ENCODE measurements at regions of chr15 and their contacts with region 1.

Region 1: DNA sequence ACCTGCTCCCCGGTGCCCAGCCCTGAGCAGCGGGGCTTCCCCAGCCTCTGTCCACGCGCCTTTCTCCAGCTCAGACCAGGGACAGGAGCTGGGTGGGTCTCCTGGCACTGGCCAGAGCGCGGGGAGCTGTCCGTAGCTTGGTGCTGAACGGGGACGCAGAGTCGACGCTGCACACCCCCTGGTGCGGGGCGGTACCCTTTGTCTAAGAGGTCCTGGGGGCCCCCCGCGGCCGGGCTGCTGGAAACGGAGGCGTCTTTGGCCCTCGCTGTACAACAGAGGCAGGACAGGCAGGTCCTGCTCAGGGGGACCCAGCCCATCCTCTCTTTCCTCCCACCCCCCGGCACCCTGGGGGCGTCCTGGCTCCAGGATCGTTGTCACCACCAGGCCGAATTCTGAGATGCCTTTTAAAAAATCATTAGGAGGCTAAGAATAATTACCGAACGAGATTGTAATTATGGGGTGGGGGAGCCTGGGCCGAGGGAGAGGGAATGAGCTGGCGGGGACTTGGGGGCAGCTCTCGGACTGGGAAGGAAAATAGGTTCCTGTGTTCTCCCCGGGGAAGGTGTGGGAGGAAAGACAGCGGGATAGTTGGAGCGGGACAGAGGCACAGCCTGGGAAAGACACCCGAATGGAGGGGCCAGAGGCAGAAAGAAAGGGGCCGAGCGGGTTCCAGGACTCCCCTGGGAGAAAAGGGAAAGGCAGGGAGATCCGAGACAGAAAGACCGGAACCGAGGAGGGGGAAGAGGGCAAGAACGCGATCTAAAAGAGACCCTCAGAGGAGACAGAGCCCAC is 4.1 kb upstream of the SKOR1 start:
- DNase-seq: peak in 1 of 2 experiments; percentile 86
- H3K4me3 ChIP-seq: peak overlapping the region in 3 of 4 experiments; percentile 6 to 50 (median 19); a peak in 5 of 8 replicates
- H3K27ac ChIP-seq: no peak overlapping the region
- H3K4me1 ChIP-seq: peaks cover 2 to 46% (median 36%) of the 10 kb centered on the region in 4 experiments
- H3K27me3 ChIP-seq: peaks cover 74 to 87% (median 86%) of the 10 kb centered on the region in 4 experiments
- CTCF ChIP-seq: no peak
- EP300 ChIP-seq: no peak
- POLR2A ChIP-seq: no peak
- RAD21 ChIP-seq: no peak; a peak in 1 of 4 replicates

Region 2: DNA sequence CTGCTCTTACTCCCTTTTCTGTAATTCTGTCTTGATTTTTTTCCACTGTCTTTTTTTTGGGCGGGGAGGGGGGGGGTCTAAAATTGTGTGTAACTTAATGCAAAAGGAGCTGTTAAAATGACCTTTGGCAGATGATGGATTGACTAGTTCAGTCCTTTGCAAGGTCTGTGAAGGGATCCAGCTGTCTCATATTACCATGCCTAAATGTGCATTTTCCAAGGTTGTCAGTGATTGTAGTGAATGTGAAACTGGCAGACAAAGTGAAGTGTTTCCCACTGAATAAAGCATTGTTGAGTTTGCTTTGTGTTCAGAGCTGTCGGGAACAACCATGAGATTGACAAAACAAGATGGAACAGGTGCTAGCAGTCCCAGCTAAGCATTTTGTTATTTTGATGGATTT is 106.0 kb before region 1 on chr15:
- CTCF ChIA-PET with region 1: no interaction called
- POLR2A ChIA-PET with region 1: no interaction called
- DNase-seq: no peak
- H3K4me3 ChIP-seq: no peak overlapping the region
- H3K27ac ChIP-seq: no peak overlapping the region
- H3K4me1 ChIP-seq: 0 out of 7 replicates have a peak, but pooled peaks cover 0 to under 1% (median 0%) of the 10 kb centered on the region in 4 experiments
- H3K27me3 ChIP-seq: no peaks in the 10 kb centered on the region
- CTCF ChIP-seq: no peak
- EP300 ChIP-seq: no peak
- POLR2A ChIP-seq: no peak
- RAD21 ChIP-seq: no peak

Region 3: DNA sequence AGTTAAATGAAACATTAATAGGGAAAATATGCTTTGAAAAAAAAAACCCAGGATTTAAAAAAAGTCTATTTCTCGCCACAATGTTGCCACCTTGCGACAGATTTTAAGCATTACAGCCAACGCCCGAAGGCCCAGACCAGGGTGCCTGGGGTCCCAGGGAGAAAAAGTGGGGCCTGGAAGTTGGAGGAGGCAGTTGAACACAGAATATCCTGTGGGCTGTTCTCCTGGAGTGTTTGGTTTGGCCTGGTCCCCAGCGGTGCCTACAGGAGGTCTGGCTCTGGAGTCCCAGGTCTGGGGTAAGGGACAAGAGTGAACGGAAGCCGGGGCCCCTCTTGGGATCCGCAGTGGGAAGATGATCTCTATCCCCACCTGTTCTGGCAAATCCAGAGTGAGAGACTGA is 15.3 kb after region 1 on chr15:
- CTCF ChIA-PET with region 1: interaction called, 11 read pairs
- POLR2A ChIA-PET with region 1: interaction called, 24 read pairs
- DNase-seq: peak in 1 of 2 experiments; percentile 77
- H3K4me3 ChIP-seq: peak overlapping the region in 3 of 4 experiments; percentile 39 to 63 (median 52); a peak in 6 of 8 replicates
- H3K27ac ChIP-seq: no peak overlapping the region
- H3K4me1 ChIP-seq: peaks cover 15 to 27% (median 21%) of the 10 kb centered on the region in 4 experiments; a peak in 6 of 7 replicates
- H3K27me3 ChIP-seq: peaks cover 52 to 81% (median 74%) of the 10 kb centered on the region in 4 experiments
- CTCF ChIP-seq: peak; percentile 58 to 63 (median 60)
- EP300 ChIP-seq: no peak
- POLR2A ChIP-seq: no peak
- RAD21 ChIP-seq: peak; percentile 78 to 83

Region 4: DNA sequence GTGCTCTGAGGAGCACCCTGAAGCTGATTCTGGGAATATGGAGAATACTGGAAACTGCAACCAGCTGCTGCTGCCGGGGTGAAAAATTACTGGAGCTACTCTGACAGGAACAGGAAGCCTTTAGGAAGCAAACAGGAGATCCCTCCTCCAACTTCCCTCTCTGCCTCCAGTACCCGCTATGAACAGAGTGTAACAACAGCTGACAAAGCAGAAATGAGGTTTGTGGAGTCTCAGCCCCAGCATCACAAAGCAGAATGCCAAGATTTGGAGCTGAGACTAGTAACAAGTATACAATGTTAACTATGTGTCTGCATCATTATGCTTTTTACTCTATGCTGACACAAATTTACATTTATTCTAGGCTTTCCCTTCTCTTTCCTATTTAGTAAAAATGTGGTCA is 210.2 kb after region 1 on chr15:
- CTCF ChIA-PET with region 1: no interaction called
- POLR2A ChIA-PET with region 1: no interaction called
- DNase-seq: no peak
- H3K4me3 ChIP-seq: no peak overlapping the region
- H3K27ac ChIP-seq: no peak overlapping the region
- H3K4me1 ChIP-seq: no peaks in the 10 kb centered on the region
- H3K27me3 ChIP-seq: no peaks in the 10 kb centered on the region
- CTCF ChIP-seq: no peak
- EP300 ChIP-seq: no peak
- POLR2A ChIP-seq: no peak
- RAD21 ChIP-seq: no peak